ENCODE measurements at regions of chr2 and their contacts with region 1.

Region 1: GRCh38 chr2:202418511-202418910 is 42.4 kb downstream of the BMPR2 start:
- DNase-seq: no peak
- H3K4me3 ChIP-seq: no peak overlapping the region
- CTCF ChIP-seq: no peak

Region 2: DNA sequence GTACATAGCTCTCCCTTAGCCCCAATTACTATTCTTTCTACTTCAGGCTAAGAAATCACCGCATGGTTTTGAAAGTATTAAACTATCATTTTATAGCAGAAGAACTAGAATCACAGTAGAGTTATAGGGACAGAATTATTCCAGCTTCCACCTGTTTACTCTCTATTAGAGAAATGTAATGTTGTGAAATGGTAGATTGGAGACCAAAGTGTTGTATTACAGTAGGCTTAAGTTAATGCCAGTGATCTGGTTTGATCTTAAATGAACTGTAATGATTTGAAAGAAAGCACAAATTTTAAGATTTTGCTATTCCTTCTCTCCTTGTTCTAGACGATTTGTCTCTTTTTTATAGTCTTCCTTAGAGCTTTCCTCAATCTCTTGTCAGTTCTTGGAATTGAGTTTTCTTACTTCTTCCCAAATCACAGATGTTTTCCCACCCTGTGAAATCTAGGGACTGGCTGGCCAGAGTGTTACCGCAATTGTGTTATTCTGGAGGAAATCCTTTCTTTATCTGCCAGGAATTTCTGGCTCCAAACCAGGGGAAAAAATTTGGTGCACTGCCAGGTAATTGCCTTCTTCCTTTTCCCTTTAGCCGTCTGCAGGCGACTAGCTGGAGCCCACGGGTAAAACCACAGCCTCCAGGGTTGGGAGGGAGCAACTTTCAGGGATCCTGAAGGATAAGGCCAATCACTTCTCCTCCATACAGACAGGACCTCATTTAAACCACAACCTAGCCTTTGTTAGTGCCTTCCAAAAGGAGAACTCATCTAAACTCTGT is 101.2 kb before region 1 on chr2:
- in situ Hi-C with region 1: loop called (anchors 5 kb)
- DNase-seq: peak; percentile 97
- H3K4me3 ChIP-seq: no peak overlapping the region
- CTCF ChIP-seq: no peak

Region 3: DNA sequence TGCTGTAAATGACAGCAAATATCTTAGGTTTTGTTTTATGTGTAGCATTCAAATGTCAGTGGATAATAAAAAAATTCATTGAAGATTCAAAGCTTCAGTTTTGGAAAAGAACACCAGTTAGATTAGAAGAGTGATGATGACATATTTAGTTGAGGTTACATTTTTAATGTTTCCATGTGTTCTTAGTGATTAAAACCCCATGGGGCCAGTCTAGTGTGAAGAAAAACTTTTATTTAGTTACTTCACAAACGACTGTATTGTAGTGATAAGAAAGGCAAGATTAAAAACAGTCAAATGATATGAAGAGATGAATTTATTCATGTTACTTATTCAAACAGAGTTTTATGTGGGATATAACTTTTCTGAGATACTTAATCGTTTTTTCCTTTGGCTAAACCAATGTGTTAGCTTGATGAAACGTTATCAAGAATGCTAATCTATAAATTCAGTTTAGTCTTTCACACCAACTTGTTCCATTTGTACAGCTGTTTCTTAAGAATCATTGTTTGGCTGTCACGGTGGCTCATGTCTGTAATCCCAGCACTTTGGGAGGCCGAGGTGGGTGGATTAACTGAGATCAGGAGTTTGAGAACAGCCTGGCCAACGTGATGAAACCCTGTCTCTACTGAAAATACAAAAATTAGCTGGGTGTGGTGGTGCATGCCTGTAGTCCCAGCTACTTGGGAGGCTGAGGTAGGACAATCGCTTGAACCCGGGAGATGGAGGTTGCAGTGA is 30.7 kb before region 1 on chr2:
- in situ Hi-C with region 1: no loop called
- DNase-seq: no peak
- H3K4me3 ChIP-seq: no peak overlapping the region
- CTCF ChIP-seq: no peak

Region 4: GRCh38 chr2:202450785-202451184 is 32.3 kb after region 1 on chr2:
- in situ Hi-C with region 1: no loop called
- DNase-seq: no peak
- H3K4me3 ChIP-seq: no peak overlapping the region
- CTCF ChIP-seq: no peak

Region 5: DNA sequence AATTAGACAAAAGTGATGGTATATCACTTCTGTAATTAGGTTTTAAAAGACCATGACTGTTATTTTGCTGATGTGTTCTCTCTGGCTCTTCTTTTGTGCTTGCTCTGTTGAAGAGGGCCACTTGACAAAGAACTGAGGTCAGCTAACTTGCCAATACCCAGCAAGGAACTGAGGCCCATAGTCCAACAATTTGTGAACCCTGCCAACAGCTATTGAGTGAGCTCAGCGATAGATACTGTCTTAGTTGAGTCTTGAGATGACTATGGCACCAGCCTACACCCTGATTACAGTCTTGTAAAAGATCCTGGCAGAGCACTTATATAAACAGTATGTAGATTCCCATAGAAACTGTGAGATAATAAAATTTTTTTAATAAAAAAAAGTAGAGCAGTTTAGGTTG is 60.6 kb after region 1 on chr2:
- in situ Hi-C with region 1: no loop called
- DNase-seq: no peak
- H3K4me3 ChIP-seq: no peak overlapping the region
- CTCF ChIP-seq: no peak

Region 6: DNA sequence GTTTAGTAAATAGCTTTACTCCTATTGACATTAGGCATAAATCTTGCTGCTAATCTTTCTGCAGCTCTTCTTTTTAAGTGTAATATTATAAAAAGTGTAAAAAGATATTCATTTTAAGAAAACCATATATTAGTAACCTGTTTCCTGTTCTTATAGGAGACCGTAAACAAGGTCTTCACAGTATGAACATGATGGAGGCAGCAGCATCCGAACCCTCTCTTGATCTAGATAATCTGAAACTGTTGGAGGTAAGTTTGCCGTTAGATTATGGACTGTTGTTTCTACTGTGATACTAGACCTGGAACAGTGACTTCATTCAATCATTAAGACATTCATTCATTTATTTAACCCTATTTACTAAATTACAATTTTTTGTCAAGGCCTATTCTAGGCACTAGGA is 96.2 kb after region 1 on chr2:
- in situ Hi-C with region 1: no loop called
- DNase-seq: no peak
- H3K4me3 ChIP-seq: no peak overlapping the region
- CTCF ChIP-seq: no peak

Measured in astrocyte of the cerebellum (primary cell).